Thyroid gland (tissue), 4 donors: ENCODE measurements at regions of chr19 and their contacts with region 1.

Region 1: GRCh38 chr19:33905937-33906576 is 109.4 kb downstream of the KCTD15 start:
- DNase-seq: peak; percentile 78 to 83
- H3K4me3 ChIP-seq: peak overlapping the region; percentile 36 to 52 (median 44)
- H3K27ac ChIP-seq: peak overlapping the region; percentile 42 to 83 (median 42)
- H3K4me1 ChIP-seq: peaks cover 6 to 15% of the 10 kb centered on the region in 2 donors
- H3K27me3 ChIP-seq: no peaks in the 10 kb centered on the region
- CTCF ChIP-seq: no peak
- POLR2A ChIP-seq: peak in 1 of 2 donors; percentile 50

Region 2: GRCh38 chr19:33804021-33804799 is 101.8 kb before region 1 on chr19:
- intact Hi-C with region 1: loop called (anchors 5 kb)
- DNase-seq: peak; percentile 80 to 81
- H3K4me3 ChIP-seq: no peak overlapping the region
- H3K27ac ChIP-seq: peak overlapping the region; percentile 18 to 65 (median 62)
- H3K4me1 ChIP-seq: peaks cover 13 to 24% of the 10 kb centered on the region in 2 donors
- H3K27me3 ChIP-seq: no peaks in the 10 kb centered on the region
- CTCF ChIP-seq: no peak
- POLR2A ChIP-seq: no peak

Region 3: GRCh38 chr19:33868788-33869412 is 37.2 kb before region 1 on chr19:
- intact Hi-C with region 1: no loop called
- DNase-seq: peak; percentile 12 to 23
- H3K4me3 ChIP-seq: no peak overlapping the region
- H3K27ac ChIP-seq: no peak overlapping the region
- H3K4me1 ChIP-seq: peaks cover 0 to 10% of the 10 kb centered on the region in 2 donors
- H3K27me3 ChIP-seq: no peaks in the 10 kb centered on the region
- CTCF ChIP-seq: no peak
- POLR2A ChIP-seq: no peak

Region 4: GRCh38 chr19:34023381-34023780 is 117.3 kb after region 1 on chr19:
- intact Hi-C with region 1: no loop called
- DNase-seq: no peak
- H3K4me3 ChIP-seq: no peak overlapping the region
- H3K27ac ChIP-seq: no peak overlapping the region
- H3K4me1 ChIP-seq: no peaks in the 10 kb centered on the region
- H3K27me3 ChIP-seq: no peaks in the 10 kb centered on the region
- CTCF ChIP-seq: no peak
- POLR2A ChIP-seq: no peak